ENCODE measurements at regions of chrX and their contacts with region 1.

Region 1: GRCh38 chrX:19863212-19863856 is 24.1 kb downstream of the SH3KBP1 start:
- DNase-seq: peak; percentile 78
- H3K4me3 ChIP-seq: peak overlapping the region; percentile 59
- H3K27ac ChIP-seq: peak overlapping the region; percentile 96
- H3K4me1 ChIP-seq: peaks cover 96% of the 10 kb centered on the region
- CTCF ChIP-seq: no peak

Region 2: DNA sequence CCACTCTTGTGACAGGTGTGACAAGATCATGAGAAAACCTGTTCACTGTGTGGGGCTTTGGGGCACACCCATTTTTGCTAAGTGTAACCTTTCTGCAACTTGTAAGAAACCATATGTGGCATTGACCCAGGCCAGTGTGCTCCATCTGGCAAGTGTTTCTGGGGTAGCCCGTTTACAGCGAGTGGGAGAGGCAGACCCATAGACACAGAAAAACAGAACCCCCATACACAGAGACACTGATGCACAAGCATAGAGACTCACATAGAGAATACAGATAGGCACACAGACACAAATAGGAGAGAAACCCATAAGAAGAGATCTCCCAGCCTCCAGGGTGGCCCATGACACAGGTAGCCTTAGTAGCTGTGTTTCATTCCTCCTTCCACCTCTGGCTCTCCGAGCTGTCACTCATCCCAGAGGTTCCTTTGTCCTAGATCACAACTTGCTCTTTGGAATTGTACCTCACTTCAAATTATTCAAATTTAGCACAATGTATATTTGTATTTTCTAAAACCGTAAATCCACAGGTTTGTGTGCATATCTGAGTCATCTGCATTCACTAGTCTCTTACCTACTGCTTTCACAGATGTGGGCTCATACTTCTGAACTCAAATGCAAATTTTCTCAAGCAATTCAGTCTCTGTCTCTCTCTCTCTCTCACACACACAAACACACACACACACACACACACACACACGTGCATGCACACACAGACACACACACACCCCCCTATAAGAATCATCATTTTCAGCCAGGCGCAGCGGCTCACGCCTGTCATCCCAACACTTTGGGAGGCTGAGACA is 90.3 kb before region 1 on chrX:
- CTCF ChIA-PET with region 1: no interaction called
- POLR2A ChIA-PET with region 1: no interaction called
- intact Hi-C with region 1: loop called (anchors 10 kb)
- DNase-seq: peak; percentile 52
- H3K4me3 ChIP-seq: peak overlapping the region; percentile 62
- H3K27ac ChIP-seq: peak overlapping the region; percentile 100
- H3K4me1 ChIP-seq: peaks cover 89% of the 10 kb centered on the region
- CTCF ChIP-seq: no peak

Region 3: DNA sequence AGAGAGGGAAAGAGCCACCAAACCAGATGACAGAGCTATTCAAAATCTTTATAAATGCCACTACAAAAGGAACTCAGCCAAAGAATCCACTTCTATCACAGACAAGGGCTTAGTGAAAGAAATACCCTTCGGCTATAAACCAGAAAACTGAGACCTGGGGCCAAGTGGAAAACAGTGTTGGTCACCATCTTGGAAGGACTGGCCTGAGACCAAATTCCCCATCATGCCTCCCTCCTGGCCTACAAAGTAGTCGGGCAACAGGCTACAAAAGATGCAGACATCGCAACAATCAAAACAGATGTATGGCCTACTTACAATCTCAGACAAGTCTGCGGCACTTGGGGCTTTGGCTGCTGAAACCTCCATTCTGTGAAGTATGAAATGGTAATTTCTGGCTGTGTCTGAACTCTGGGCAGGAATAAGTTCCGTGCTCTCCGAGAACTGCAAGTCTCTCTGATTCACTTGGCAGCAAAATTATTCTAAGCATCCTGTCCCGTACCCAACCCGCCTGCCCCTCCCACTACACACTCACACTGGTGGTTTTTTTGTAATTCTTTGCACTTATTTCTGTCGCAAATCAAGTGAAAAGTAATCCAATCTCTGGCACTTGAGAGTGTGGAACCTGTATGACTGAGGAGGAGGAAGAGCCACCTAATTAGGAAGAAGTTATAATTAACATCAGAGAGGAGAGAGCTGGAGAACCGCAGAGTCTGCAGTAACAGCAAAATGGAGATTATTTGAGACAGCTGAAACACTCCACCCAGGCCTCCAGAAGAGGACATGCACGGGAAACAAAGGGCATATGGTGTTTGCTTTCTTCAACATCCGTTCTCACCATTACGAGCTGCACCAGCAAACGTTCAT is 63.8 kb before region 1 on chrX:
- CTCF ChIA-PET with region 1: no interaction called
- POLR2A ChIA-PET with region 1: interaction called, 3 read pairs
- intact Hi-C with region 1: loop called (anchors 10 kb)
- DNase-seq: peak; percentile 61
- H3K4me3 ChIP-seq: peak overlapping the region; percentile 59
- H3K27ac ChIP-seq: peak overlapping the region; percentile 76
- H3K4me1 ChIP-seq: peaks cover 79% of the 10 kb centered on the region
- CTCF ChIP-seq: no peak

Region 4: GRCh38 chrX:19840899-19841648 is 22.3 kb before region 1 on chrX:
- CTCF ChIA-PET with region 1: no interaction called
- POLR2A ChIA-PET with region 1: interaction called, 5 read pairs
- intact Hi-C with region 1: loop called (anchors 2 kb)
- DNase-seq: peak; percentile 55
- H3K4me3 ChIP-seq: peak overlapping the region; percentile 46
- H3K27ac ChIP-seq: peak overlapping the region; percentile 81
- H3K4me1 ChIP-seq: peaks cover 51% of the 10 kb centered on the region
- CTCF ChIP-seq: no peak

Region 5: GRCh38 chrX:19849464-19850080 is 13.8 kb before region 1 on chrX:
- CTCF ChIA-PET with region 1: no interaction called
- POLR2A ChIA-PET with region 1: interaction called, 11 read pairs
- intact Hi-C with region 1: no loop called
- DNase-seq: peak; percentile 51
- H3K4me3 ChIP-seq: peak overlapping the region; percentile 48
- H3K27ac ChIP-seq: peak overlapping the region; percentile 50
- H3K4me1 ChIP-seq: peaks cover 51% of the 10 kb centered on the region
- CTCF ChIP-seq: no peak

Region 6: GRCh38 chrX:20402956-20403355 is 539.6 kb after region 1 on chrX:
- CTCF ChIA-PET with region 1: no interaction called
- POLR2A ChIA-PET with region 1: no interaction called
- intact Hi-C with region 1: no loop called
- DNase-seq: no peak
- H3K4me3 ChIP-seq: no peak overlapping the region
- H3K27ac ChIP-seq: no peak overlapping the region
- H3K4me1 ChIP-seq: no peaks in the 10 kb centered on the region
- CTCF ChIP-seq: no peak